Activated naive CD4-positive, alpha-beta T cell treated with anti-CD3 and anti-CD28 coated beads, Interleukin-2, amount 10 ng/mL, durations not matched to agents 7 days and 5 days (primary cell): ENCODE measurements at regions of chr7 and their contacts with region 1.

Region 1: GRCh38 chr7:24812310-24812945 is 55.2 kb upstream of the GSDME start:
- DNase-seq: peak; percentile 60
- H3K4me3 Mint-ChIP-seq: no peak overlapping the region
- H3K27ac Mint-ChIP-seq: no peak overlapping the region
- H3K4me1 Mint-ChIP-seq: no peaks in the 10 kb centered on the region
- H3K27me3 Mint-ChIP-seq: no peaks in the 10 kb centered on the region

Region 2: GRCh38 chr7:24979863-24980533 is 167.6 kb after region 1 on chr7 and contains the start of gene OSBPL3:
- CTCF ChIA-PET with region 1: interaction called, 10 read pairs
- DNase-seq: peak; percentile 97
- H3K4me3 Mint-ChIP-seq: peak within 1 kb of the TSS; percentile 85
- H3K27ac Mint-ChIP-seq: peak within 1 kb of the TSS; percentile 92
- H3K4me1 Mint-ChIP-seq: peaks cover 62% of the 10 kb centered on the region
- H3K27me3 Mint-ChIP-seq: peaks cover 19% of the 10 kb centered on the region

Region 3: GRCh38 chr7:25069900-25070443 is 257.5 kb after region 1 on chr7:
- CTCF ChIA-PET with region 1: interaction called, 41 read pairs
- DNase-seq: peak; percentile 65
- H3K4me3 Mint-ChIP-seq: no peak overlapping the region
- H3K27ac Mint-ChIP-seq: no peak overlapping the region
- H3K4me1 Mint-ChIP-seq: peaks cover 11% of the 10 kb centered on the region
- H3K27me3 Mint-ChIP-seq: peaks cover 13% of the 10 kb centered on the region

Region 4: GRCh38 chr7:25093268-25093826 is 280.9 kb after region 1 on chr7:
- CTCF ChIA-PET with region 1: interaction called, 50 read pairs
- DNase-seq: peak; percentile 86
- H3K4me3 Mint-ChIP-seq: no peak overlapping the region
- H3K27ac Mint-ChIP-seq: no peak overlapping the region
- H3K4me1 Mint-ChIP-seq: peaks cover 9% of the 10 kb centered on the region
- H3K27me3 Mint-ChIP-seq: peaks cover 13% of the 10 kb centered on the region

Region 5: DNA sequence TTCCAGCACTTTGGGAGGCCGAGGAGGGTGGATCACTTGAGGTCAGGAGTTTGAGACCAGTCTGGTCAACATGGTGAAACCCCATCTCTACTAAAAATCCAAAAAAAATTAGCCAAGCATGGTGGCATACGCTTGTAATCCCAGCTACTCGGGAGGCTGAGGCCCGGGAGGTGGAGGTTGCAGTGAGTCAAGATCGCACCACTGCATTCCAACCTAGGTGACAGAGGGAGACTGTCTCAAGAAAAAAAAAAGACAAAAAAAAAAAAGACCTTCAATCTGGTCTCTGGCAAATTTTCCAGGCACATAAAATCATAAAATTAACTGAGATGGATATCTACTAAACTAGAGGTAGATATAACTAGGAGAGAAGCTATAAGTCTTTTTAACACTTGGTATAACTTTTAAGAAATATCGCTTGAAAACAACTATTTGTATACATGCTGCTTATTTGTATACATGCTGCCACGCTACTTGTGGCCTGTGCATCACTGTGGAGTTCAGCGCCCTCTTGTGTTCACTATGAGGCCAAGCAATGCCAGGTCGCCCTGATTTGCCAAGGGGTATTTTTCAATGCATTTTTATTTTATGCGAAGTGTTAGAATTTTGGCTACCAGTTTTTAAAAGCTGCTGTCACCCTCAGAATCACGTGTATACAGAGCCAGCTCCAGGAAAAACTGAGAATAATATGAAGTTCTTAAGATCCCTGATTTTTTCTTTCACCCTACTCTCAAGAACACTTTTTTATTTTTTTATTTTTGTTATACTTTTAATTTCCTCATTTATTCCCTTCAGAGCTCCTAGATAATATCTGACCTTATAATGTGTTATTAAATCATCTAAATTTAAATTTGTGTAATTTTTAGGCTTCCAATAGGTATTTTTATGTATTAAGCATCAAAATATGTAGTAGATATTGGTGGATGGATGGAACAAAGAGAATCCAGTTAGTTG is 285.9 kb after region 1 on chr7:
- CTCF ChIA-PET with region 1: interaction called, 50 read pairs
- DNase-seq: peak; percentile 73
- H3K4me3 Mint-ChIP-seq: no peak overlapping the region
- H3K27ac Mint-ChIP-seq: no peak overlapping the region
- H3K4me1 Mint-ChIP-seq: peaks cover 5% of the 10 kb centered on the region
- H3K27me3 Mint-ChIP-seq: peaks cover 12% of the 10 kb centered on the region

Region 6: GRCh38 chr7:25103773-25104172 is 291.3 kb after region 1 on chr7:
- CTCF ChIA-PET with region 1: interaction called, 15 read pairs
- DNase-seq: no peak
- H3K4me3 Mint-ChIP-seq: no peak overlapping the region
- H3K27ac Mint-ChIP-seq: no peak overlapping the region
- H3K4me1 Mint-ChIP-seq: no peaks in the 10 kb centered on the region
- H3K27me3 Mint-ChIP-seq: peaks cover 4% of the 10 kb centered on the region